ENCODE measurements at regions of chr3 and their contacts with region 1.

Region 1: GRCh38 chr3:113514265-113514769 is 639 bp downstream of the SPICE1 start:
- DNase-seq: no peak
- ATAC-seq: no peak
- H3K4me3 ChIP-seq: peak overlapping the region; percentile 99
- H3K4me3 Mint-ChIP-seq: no peak overlapping the region
- H3K27ac ChIP-seq: peak overlapping the region; percentile 87
- H3K27ac Mint-ChIP-seq: no peak overlapping the region
- H3K4me1 ChIP-seq: peaks cover 7 to 8% of the 10 kb centered on the region in 2 donors
- H3K4me1 Mint-ChIP-seq: peaks cover 6 to 30% (median 27%) of the 10 kb centered on the region in 7 donors
- H3K27me3 ChIP-seq: no peaks in the 10 kb centered on the region
- H3K27me3 Mint-ChIP-seq: peaks cover 10 to 29% (median 15%) of the 10 kb centered on the region in 5 donors

Region 2: GRCh38 chr3:112874725-112875124 is 639.6 kb before region 1 on chr3:
- CTCF ChIA-PET with region 1: no interaction called
- POLR2A ChIA-PET with region 1: no interaction called
- intact Hi-C with region 1: no loop called
- DNase-seq: no peak
- ATAC-seq: no peak
- H3K4me3 ChIP-seq: no peak overlapping the region
- H3K4me3 Mint-ChIP-seq: no peak overlapping the region
- H3K27ac ChIP-seq: no peak overlapping the region
- H3K27ac Mint-ChIP-seq: no peak overlapping the region
- H3K4me1 ChIP-seq: no peaks in the 10 kb centered on the region
- H3K4me1 Mint-ChIP-seq: peaks cover 0 to 2% (median 0%) of the 10 kb centered on the region in 7 donors
- H3K27me3 ChIP-seq: no peaks in the 10 kb centered on the region
- H3K27me3 Mint-ChIP-seq: peaks cover 0 to under 1% (median 0%) of the 10 kb centered on the region in 5 donors

Region 3: GRCh38 chr3:113183748-113184661 is 330.3 kb before region 1 on chr3:
- CTCF ChIA-PET with region 1: no interaction called
- POLR2A ChIA-PET with region 1: no interaction called
- intact Hi-C with region 1: no loop called
- DNase-seq: no peak
- ATAC-seq: no peak
- H3K4me3 ChIP-seq: no peak overlapping the region
- H3K4me3 Mint-ChIP-seq: no peak overlapping the region
- H3K27ac ChIP-seq: no peak overlapping the region
- H3K27ac Mint-ChIP-seq: no peak overlapping the region
- H3K4me1 ChIP-seq: no peaks in the 10 kb centered on the region
- H3K4me1 Mint-ChIP-seq: no peaks in the 10 kb centered on the region
- H3K27me3 ChIP-seq: no peaks in the 10 kb centered on the region
- H3K27me3 Mint-ChIP-seq: peaks cover 0 to 8% (median 4%) of the 10 kb centered on the region in 5 donors

Region 4: DNA sequence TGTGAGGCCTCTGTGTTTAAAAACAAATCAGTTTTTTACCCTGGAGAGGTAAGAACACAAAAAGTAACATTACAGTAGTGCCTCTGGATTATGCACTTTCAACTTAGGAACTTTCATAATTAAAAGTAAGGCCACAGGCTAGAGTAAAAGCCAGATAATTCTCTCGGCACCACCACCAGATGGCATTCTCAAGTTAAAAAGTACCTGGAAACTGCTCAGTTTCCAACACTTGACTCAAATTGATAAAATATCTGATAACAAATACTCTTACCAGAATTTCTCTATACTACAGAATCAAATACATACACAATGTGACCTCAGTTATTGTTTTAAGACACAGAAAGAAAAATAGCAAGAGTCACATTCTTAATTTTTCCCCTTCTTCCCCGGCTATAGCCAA is 19.3 kb before region 1 on chr3:
- CTCF ChIA-PET with region 1: interaction called, 24 read pairs
- POLR2A ChIA-PET with region 1: interaction called, 12 read pairs
- intact Hi-C with region 1: loop called (anchors 1 to 2 kb)
- DNase-seq: peak in 6 of 9 donors; percentile 22 to 62 (median 42)
- ATAC-seq: peak; percentile 67
- H3K4me3 ChIP-seq: no peak overlapping the region
- H3K4me3 Mint-ChIP-seq: no peak overlapping the region
- H3K27ac ChIP-seq: no peak overlapping the region
- H3K27ac Mint-ChIP-seq: no peak overlapping the region
- H3K4me1 ChIP-seq: no peaks in the 10 kb centered on the region
- H3K4me1 Mint-ChIP-seq: peaks cover 0 to 10% (median under 1%) of the 10 kb centered on the region in 7 donors
- H3K27me3 ChIP-seq: no peaks in the 10 kb centered on the region
- H3K27me3 Mint-ChIP-seq: no peaks in the 10 kb centered on the region

Region 5: GRCh38 chr3:113552851-113553250 is 38.5 kb after region 1 on chr3:
- CTCF ChIA-PET with region 1: interaction called, 13 read pairs
- POLR2A ChIA-PET with region 1: interaction called, 11 read pairs
- intact Hi-C with region 1: loop called in 1 of 2 experiments (anchors 5 kb)
- DNase-seq: peak in 7 of 9 donors; percentile 31 to 58 (median 47)
- ATAC-seq: peak; percentile 81
- H3K4me3 ChIP-seq: no peak overlapping the region
- H3K4me3 Mint-ChIP-seq: no peak overlapping the region
- H3K27ac ChIP-seq: no peak overlapping the region
- H3K27ac Mint-ChIP-seq: peak overlapping the region in 6 of 9 donors; percentile 0 to 79 (median 28)
- H3K4me1 ChIP-seq: no peaks in the 10 kb centered on the region
- H3K4me1 Mint-ChIP-seq: peaks cover 9 to 80% (median 62%) of the 10 kb centered on the region in 7 donors
- H3K27me3 ChIP-seq: no peaks in the 10 kb centered on the region
- H3K27me3 Mint-ChIP-seq: no peaks in the 10 kb centered on the region

Region 6: GRCh38 chr3:113696658-113697499 is 182.6 kb after region 1 on chr3:
- CTCF ChIA-PET with region 1: interaction called, 4 read pairs
- POLR2A ChIA-PET with region 1: interaction called, 9 read pairs
- intact Hi-C with region 1: loop called (anchors 1 kb)
- DNase-seq: peak; percentile 96 to 100 (median 99)
- ATAC-seq: peak; percentile 93
- H3K4me3 ChIP-seq: peak overlapping the region; percentile 82
- H3K4me3 Mint-ChIP-seq: no peak overlapping the region
- H3K27ac ChIP-seq: peak overlapping the region; percentile 99
- H3K27ac Mint-ChIP-seq: no peak overlapping the region
- H3K4me1 ChIP-seq: peaks cover 11 to 27% of the 10 kb centered on the region in 2 donors
- H3K4me1 Mint-ChIP-seq: peaks cover 23 to 36% (median 29%) of the 10 kb centered on the region in 7 donors
- H3K27me3 ChIP-seq: no peaks in the 10 kb centered on the region
- H3K27me3 Mint-ChIP-seq: no peaks in the 10 kb centered on the region

Region 7: GRCh38 chr3:114056130-114057010 is 542.1 kb after region 1 on chr3 and contains the starts of genes CCDC191 and QTRT2:
- CTCF ChIA-PET with region 1: no interaction called
- POLR2A ChIA-PET with region 1: no interaction called
- intact Hi-C with region 1: loop called (anchors 1 to 2 kb)
- DNase-seq: peak; percentile 82 to 99 (median 98)
- ATAC-seq: peak; percentile 97
- H3K4me3 ChIP-seq: peak within 1 kb of the TSS; percentile 95
- H3K4me3 Mint-ChIP-seq: peak within 1 kb of the TSS; percentile 91 to 100 (median 98)
- H3K27ac ChIP-seq: peak within 1 kb of the TSS; percentile 91
- H3K27ac Mint-ChIP-seq: peak within 1 kb of the TSS; percentile 87 to 99 (median 97)
- H3K4me1 ChIP-seq: peaks cover 10 to 12% of the 10 kb centered on the region in 2 donors
- H3K4me1 Mint-ChIP-seq: peaks cover 24 to 60% (median 55%) of the 10 kb centered on the region in 7 donors
- H3K27me3 ChIP-seq: no peaks in the 10 kb centered on the region
- H3K27me3 Mint-ChIP-seq: peaks cover 0 to 2% (median 0%) of the 10 kb centered on the region in 5 donors
- total RNA-seq, gene CCDC191: 3.9 to 8.8 (median 5.1) TPM
- total RNA-seq, gene QTRT2: 29.9 to 38.8 (median 33.8) TPM

Measured in naive thymus-derived CD4-positive, alpha-beta T cell (primary cell).